CD4-positive, alpha-beta memory T cell (primary cell): ENCODE measurements at regions of chr2 and their contacts with region 1.

Region 1: GRCh38 chr2:30239308-30239985 is 8.1 kb downstream of the LBH start:
- DNase-seq: peak; percentile 76 to 80 (median 77)
- H3K4me3 ChIP-seq: peak overlapping the region in 1 of 2 donors; percentile 22
- H3K4me3 Mint-ChIP-seq: peak overlapping the region; percentile 76 to 99 (median 87)
- H3K27ac ChIP-seq: peak overlapping the region; percentile 6
- H3K27ac Mint-ChIP-seq: peak overlapping the region; percentile 71 to 90 (median 83)
- H3K4me1 ChIP-seq: peaks cover 90% of the 10 kb centered on the region
- H3K4me1 Mint-ChIP-seq: peaks cover 72 to 94% (median 82%) of the 10 kb centered on the region in 4 donors
- H3K27me3 ChIP-seq: no peaks in the 10 kb centered on the region
- H3K27me3 Mint-ChIP-seq: no peaks in the 10 kb centered on the region

Region 2: DNA sequence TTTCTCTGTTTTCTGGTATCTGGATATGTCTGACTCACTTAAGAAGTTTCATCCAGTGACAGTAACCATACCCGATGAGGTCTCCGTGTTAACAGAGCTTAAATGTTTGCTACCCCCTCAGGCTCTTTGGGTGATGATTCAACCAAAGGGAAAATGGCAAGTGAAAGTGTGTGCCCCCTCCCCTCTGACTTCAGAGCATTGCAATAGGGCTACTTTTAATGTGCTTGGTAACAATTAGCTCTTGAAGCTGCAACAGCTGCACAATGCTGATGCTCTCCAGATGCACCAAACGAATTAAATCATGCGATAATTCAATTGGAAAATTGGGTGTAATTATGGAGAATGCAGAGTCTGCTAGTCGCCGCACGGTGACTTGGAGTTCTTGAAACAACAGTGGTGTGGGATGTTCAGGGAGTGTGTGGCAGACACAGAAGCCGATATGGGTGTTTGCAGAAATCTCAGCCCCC is 588.8 kb before region 1 on chr2:
- CTCF ChIA-PET with region 1: no interaction called
- POLR2A ChIA-PET with region 1: no interaction called
- intact Hi-C with region 1: no loop called
- DNase-seq: no peak
- H3K4me3 ChIP-seq: no peak overlapping the region
- H3K4me3 Mint-ChIP-seq: no peak overlapping the region
- H3K27ac ChIP-seq: no peak overlapping the region
- H3K27ac Mint-ChIP-seq: no peak overlapping the region
- H3K4me1 ChIP-seq: no peaks in the 10 kb centered on the region
- H3K4me1 Mint-ChIP-seq: no peaks in the 10 kb centered on the region
- H3K27me3 ChIP-seq: no peaks in the 10 kb centered on the region
- H3K27me3 Mint-ChIP-seq: peaks cover 7 to 10% of the 10 kb centered on the region in 2 donors

Region 3: GRCh38 chr2:30252723-30253701 is 13.6 kb after region 1 on chr2:
- CTCF ChIA-PET with region 1: interaction called, 65 read pairs
- POLR2A ChIA-PET with region 1: interaction called, 435 read pairs
- intact Hi-C with region 1: no loop called
- DNase-seq: peak in 4 of 5 donors; percentile 13 to 85 (median 25)
- H3K4me3 ChIP-seq: peak overlapping the region in 1 of 2 donors; percentile 17
- H3K4me3 Mint-ChIP-seq: peak overlapping the region in 7 of 8 donors; percentile 59 to 83 (median 76)
- H3K27ac ChIP-seq: peak overlapping the region; percentile 37
- H3K27ac Mint-ChIP-seq: peak overlapping the region; percentile 72 to 97 (median 93)
- H3K4me1 ChIP-seq: peaks cover 98% of the 10 kb centered on the region
- H3K4me1 Mint-ChIP-seq: peaks cover 63 to 99% (median 89%) of the 10 kb centered on the region in 4 donors
- H3K27me3 ChIP-seq: no peaks in the 10 kb centered on the region
- H3K27me3 Mint-ChIP-seq: no peaks in the 10 kb centered on the region

Region 4: DNA sequence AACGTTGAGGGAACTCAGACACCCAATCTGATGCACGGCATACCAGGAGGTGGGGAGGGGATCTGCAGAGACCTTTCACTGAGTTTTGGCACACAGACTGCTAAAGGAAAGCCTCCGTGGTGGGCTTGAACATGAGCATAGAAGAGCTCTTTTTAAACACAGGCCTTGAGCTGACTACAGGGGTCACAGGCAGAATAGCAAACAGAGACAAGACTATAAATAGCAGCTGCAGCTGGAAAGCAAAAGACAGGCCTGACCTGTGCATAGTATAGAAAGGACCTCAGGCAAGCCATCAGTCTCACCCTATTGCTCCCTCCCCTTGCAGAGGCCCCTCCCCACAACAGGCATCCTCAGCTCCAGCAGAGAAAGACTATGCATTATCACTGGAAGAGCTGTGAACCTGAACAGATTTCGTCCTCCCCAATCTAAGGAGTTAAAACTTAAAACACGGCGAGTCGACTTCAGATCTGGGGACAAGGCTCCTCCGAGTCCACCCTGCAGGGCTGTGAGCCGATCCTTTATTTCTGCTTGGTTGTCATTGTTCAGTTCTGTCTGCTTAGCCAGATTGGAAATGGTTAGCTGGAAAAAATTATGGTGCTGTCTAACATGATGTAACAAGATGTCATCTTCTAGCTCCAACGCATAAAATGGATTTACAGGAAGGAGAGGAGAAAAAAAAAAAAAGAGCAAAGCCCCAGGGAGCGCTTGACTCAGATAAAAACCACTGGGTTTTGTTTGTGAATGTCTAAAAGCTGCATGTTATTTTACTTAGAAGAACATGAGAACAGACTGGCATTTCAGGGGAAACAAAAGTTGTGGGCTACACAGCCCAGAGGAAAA is 182.4 kb after region 1 on chr2:
- CTCF ChIA-PET with region 1: interaction called, 18 read pairs
- POLR2A ChIA-PET with region 1: interaction called, 25 read pairs
- intact Hi-C with region 1: no loop called
- DNase-seq: peak in 4 of 5 donors; percentile 16 to 58 (median 26)
- H3K4me3 ChIP-seq: no peak overlapping the region
- H3K4me3 Mint-ChIP-seq: peak overlapping the region; percentile 23 to 74 (median 61)
- H3K27ac ChIP-seq: peak overlapping the region; percentile 40
- H3K27ac Mint-ChIP-seq: peak overlapping the region; percentile 68 to 93 (median 84)
- H3K4me1 ChIP-seq: peaks cover 33% of the 10 kb centered on the region
- H3K4me1 Mint-ChIP-seq: peaks cover 26 to 47% (median 31%) of the 10 kb centered on the region in 4 donors
- H3K27me3 ChIP-seq: no peaks in the 10 kb centered on the region
- H3K27me3 Mint-ChIP-seq: no peaks in the 10 kb centered on the region

Region 5: DNA sequence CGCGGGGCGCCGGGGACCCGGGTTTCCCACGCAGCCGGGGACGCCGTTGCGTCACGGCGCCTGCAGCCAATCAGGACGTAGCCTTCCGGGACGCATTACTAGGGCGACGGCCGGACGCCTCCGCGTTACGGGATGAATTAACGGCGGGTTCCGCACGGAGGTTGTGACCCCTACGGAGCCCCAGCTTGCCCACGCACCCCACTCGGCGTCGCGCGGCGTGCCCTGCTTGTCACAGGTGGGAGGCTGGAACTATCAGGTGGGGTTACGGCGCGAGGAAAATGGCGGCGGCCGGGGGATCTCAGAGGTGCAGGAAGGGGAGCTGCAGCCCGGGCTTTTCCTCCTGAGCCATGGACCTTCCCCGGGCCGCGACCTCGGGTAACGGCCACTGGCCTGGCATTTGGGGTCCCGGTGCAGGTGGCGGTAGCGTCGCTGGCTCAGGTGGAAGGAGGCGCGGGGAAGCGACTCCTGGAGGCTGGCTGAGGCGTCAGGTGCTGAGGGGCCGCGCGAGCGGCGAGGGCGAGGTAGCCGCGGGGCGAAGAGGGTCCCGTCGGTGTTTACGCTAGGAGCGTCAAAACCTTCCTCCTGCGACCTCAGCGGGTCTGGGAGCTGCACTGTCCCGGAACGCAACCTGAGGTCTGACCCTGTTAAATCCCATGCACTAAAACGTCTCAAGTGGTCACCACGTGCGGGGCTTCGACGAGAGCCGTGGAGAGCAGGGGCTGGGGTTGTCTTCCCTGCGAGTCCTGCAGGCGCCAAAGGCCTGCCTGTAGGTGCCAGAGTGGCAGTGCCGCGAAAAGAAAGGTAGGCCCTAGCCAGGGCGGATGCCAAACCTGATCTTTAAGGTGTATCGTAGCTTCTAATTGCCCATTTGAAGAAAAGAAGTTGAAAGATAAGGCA is 207.9 kb after region 1 on chr2 and contains the start of gene LCLAT1:
- CTCF ChIA-PET with region 1: interaction called, 12 read pairs
- POLR2A ChIA-PET with region 1: interaction called, 11 read pairs
- intact Hi-C with region 1: no loop called
- DNase-seq: peak; percentile 87 to 88 (median 88)
- H3K4me3 ChIP-seq: peak within 1 kb of the TSS; percentile 48 to 96
- H3K4me3 Mint-ChIP-seq: peak within 1 kb of the TSS; percentile 95 to 99 (median 96)
- H3K27ac ChIP-seq: peak within 1 kb of the TSS; percentile 83
- H3K27ac Mint-ChIP-seq: peak within 1 kb of the TSS; percentile 89 to 99 (median 98)
- H3K4me1 ChIP-seq: peaks cover 27% of the 10 kb centered on the region
- H3K4me1 Mint-ChIP-seq: peaks cover 23 to 40% (median 30%) of the 10 kb centered on the region in 4 donors
- H3K27me3 ChIP-seq: no peaks in the 10 kb centered on the region
- H3K27me3 Mint-ChIP-seq: peaks cover 0 to 1% of the 10 kb centered on the region in 2 donors
- total RNA-seq, gene LCLAT1: 11.5 to 14.1 TPM

Region 6: DNA sequence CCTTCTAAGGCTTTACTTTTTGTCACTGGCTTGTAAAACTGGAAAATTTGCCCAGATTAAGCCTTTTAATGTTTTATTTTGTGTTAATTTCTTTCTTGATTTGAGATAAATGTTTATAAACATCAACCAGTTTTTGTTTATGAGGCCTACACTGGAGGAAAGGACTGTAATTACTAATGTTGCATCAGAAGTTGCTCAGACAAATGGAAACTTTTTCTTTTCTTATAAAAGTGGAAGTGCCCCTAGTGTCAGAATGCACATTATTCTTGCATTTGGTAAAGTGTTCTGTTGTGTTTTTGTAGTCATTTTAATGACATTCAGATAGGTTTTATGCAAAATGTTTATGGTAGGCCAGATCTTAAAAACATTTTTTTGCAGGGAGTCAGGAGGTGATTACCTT is 232.9 kb after region 1 on chr2:
- CTCF ChIA-PET with region 1: interaction called, 26 read pairs
- POLR2A ChIA-PET with region 1: interaction called, 5 read pairs
- intact Hi-C with region 1: loop called (anchors 1 kb)
- DNase-seq: no peak
- H3K4me3 ChIP-seq: no peak overlapping the region
- H3K4me3 Mint-ChIP-seq: no peak overlapping the region
- H3K27ac ChIP-seq: no peak overlapping the region
- H3K27ac Mint-ChIP-seq: peak overlapping the region in 1 of 7 donors; percentile 51
- H3K4me1 ChIP-seq: no peaks in the 10 kb centered on the region
- H3K4me1 Mint-ChIP-seq: peaks cover 12 to 17% (median 15%) of the 10 kb centered on the region in 4 donors
- H3K27me3 ChIP-seq: no peaks in the 10 kb centered on the region
- H3K27me3 Mint-ChIP-seq: no peaks in the 10 kb centered on the region